H1 (cell line): ENCODE measurements at regions of chr3 and their contacts with region 1.

Region 1: DNA sequence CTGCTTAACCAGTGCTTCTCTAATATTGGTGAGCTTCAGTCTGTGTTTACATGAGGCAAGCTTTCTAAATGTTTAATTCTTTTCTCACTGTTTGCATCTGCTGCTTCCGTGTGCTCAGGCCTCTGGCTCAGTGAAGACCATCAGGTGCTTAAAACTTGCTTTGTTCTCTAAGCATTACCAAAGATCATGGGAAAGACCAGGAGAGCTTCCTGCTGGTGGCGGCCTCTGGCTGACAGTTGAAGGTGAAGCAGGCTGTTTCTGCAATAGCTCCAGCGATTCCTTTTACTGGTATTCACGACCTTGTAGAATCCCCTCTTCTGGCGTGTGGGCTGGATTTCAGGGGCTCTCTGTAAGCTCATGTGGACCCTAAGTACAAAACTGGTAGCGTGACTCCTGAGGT is 45.1 kb downstream of the EDEM1 start:
- DNase-seq: peak in 1 of 2 experiments; percentile 17
- H3K4me3 ChIP-seq: no peak overlapping the region
- H3K27ac ChIP-seq: no peak overlapping the region
- H3K4me1 ChIP-seq: no peaks in the 10 kb centered on the region
- H3K27me3 ChIP-seq: no peaks in the 10 kb centered on the region
- CTCF ChIP-seq: peak; percentile 41 to 75 (median 59); a peak in 3 of 4 replicates
- EP300 ChIP-seq: no peak
- POLR2A ChIP-seq: no peak
- RAD21 ChIP-seq: peak; percentile 38 to 52; a peak in 3 of 4 replicates

Region 2: DNA sequence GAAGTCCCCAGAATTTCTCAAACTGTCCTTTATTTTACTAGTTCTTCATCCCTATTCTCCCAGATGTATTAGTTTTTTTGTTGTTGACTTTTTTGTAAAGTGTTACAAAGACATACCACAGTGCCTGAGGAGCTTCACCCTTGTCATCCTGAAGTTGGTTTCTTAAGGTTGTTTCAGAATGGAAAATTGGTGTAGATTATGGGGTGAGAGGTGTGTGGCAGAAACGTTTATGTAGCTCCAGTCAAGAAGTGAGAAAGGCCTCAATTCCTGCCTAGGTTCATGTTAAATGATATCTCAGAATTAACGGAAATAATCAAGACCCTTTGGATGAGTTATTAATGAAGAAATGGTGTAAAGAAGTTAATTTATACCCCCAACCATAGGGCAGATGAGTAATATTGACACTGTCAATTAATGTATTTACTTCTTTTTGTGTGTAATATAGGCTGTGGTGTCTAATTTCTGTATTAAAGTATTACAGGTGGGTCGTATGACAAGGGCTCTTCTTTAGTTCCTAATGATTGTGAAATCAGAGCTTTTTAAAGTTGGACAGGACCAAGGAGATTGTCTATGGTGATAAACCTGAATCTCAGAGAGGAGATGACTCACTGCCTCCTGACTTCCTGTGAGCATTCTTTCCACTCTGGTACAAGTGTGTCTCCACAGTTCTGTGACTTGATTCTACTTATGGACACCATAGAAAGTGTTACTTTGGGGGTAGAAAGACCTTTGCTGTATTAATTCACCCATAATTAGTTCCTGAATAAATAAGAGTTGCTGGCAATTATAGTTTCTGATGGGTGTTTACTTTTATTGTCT is 38.0 kb before region 1 on chr3:
- CTCF ChIA-PET with region 1: interaction called, 10 read pairs
- POLR2A ChIA-PET with region 1: no interaction called
- DNase-seq: no peak
- H3K4me3 ChIP-seq: no peak overlapping the region
- H3K27ac ChIP-seq: no peak overlapping the region
- H3K4me1 ChIP-seq: peaks cover 0 to 9% (median 8%) of the 10 kb centered on the region in 4 experiments; a peak in 5 of 7 replicates
- H3K27me3 ChIP-seq: no peaks in the 10 kb centered on the region
- CTCF ChIP-seq: no peak
- EP300 ChIP-seq: no peak
- POLR2A ChIP-seq: no peak
- RAD21 ChIP-seq: no peak

Region 3: DNA sequence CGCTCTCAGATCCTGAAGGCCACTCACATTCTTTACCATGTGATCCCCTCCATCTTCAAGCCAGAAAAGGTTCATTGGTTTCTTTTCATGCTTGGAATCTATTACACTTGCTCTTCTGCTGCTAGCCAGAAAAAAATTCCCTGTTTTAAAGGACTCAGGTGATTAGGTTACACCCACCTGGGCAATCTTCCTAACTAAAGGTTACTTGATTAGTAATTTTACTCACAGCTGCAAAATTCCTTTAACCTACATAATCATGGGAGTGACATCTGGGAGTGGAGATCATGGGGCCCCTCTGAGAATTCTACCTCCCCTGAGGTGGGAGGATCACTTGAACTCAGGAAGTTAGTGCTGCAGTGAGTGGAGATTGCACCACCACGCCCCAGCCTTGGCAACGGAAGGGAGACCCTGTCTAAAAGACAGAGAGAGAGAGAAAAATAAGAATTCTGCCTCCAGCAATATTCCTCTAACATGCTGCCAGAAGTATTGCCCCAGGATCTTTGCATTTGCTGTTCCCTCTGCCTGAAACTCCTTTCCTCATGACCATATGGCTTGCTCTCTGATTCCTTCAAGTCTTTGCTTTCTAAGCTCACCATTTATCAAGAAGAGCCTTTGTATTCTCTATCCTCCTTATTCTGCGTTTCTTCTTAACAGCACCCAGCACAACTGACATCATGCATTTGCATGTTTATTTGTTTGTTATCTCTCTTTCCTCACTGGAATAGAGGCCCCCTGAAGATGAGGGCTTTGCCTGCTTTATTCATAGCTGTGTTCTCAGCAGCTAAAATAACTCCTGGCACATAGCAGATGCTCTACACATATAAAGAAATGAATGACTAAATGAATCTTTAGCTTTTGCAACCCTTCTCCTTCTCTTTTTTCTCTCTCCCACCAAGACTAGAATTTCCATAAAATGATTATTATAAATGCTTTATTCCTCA is 23.1 kb after region 1 on chr3:
- CTCF ChIA-PET with region 1: interaction called, 15 read pairs
- POLR2A ChIA-PET with region 1: no interaction called
- DNase-seq: no peak
- H3K4me3 ChIP-seq: no peak overlapping the region
- H3K27ac ChIP-seq: no peak overlapping the region
- H3K4me1 ChIP-seq: no peaks in the 10 kb centered on the region
- H3K27me3 ChIP-seq: no peaks in the 10 kb centered on the region
- CTCF ChIP-seq: no peak
- EP300 ChIP-seq: no peak
- POLR2A ChIP-seq: no peak
- RAD21 ChIP-seq: no peak